ENCODE measurements at regions of chr12 and their contacts with region 1.

Region 1: GRCh38 chr12:14283489-14284144 is 81.9 kb upstream of the ATF7IP start:
- DNase-seq: no peak
- ATAC-seq: no peak
- H3K4me3 ChIP-seq: no peak overlapping the region
- H3K4me3 Mint-ChIP-seq: no peak overlapping the region
- H3K27ac ChIP-seq: no peak overlapping the region
- H3K27ac Mint-ChIP-seq: no peak overlapping the region
- H3K4me1 ChIP-seq: no peaks in the 10 kb centered on the region
- H3K4me1 Mint-ChIP-seq: no peaks in the 10 kb centered on the region
- H3K27me3 ChIP-seq: no peaks in the 10 kb centered on the region
- H3K27me3 Mint-ChIP-seq: no peaks in the 10 kb centered on the region
- CTCF ChIP-seq: no peak

Region 2: GRCh38 chr12:14327711-14328381 is 44.2 kb after region 1 on chr12:
- CTCF ChIA-PET with region 1: no interaction called
- POLR2A ChIA-PET with region 1: no interaction called
- intact Hi-C with region 1: loop called in 1 of 2 experiments (anchors 1 kb)
- DNase-seq: peak in 3 of 14 experiments; percentile 14 to 23 (median 16)
- ATAC-seq: no peak
- H3K4me3 ChIP-seq: no peak overlapping the region
- H3K4me3 Mint-ChIP-seq: no peak overlapping the region
- H3K27ac ChIP-seq: no peak overlapping the region
- H3K27ac Mint-ChIP-seq: no peak overlapping the region
- H3K4me1 ChIP-seq: no peaks in the 10 kb centered on the region
- H3K4me1 Mint-ChIP-seq: no peaks in the 10 kb centered on the region
- H3K27me3 ChIP-seq: no peaks in the 10 kb centered on the region
- H3K27me3 Mint-ChIP-seq: no peaks in the 10 kb centered on the region
- CTCF ChIP-seq: no peak